ENCODE measurements at regions of chr1 and their contacts with region 1.

Region 1: GRCh38 chr1:211415700-211416099 is 76.3 kb downstream of the RD3 start:
- DNase-seq: no peak
- ATAC-seq: no peak
- H3K4me3 Mint-ChIP-seq: peak overlapping the region; percentile 66
- H3K27ac Mint-ChIP-seq: peak overlapping the region; percentile 25
- H3K4me1 Mint-ChIP-seq: peaks cover 10% of the 10 kb centered on the region
- H3K27me3 Mint-ChIP-seq: no peaks in the 10 kb centered on the region
- CTCF ChIP-seq: no peak

Region 2: DNA sequence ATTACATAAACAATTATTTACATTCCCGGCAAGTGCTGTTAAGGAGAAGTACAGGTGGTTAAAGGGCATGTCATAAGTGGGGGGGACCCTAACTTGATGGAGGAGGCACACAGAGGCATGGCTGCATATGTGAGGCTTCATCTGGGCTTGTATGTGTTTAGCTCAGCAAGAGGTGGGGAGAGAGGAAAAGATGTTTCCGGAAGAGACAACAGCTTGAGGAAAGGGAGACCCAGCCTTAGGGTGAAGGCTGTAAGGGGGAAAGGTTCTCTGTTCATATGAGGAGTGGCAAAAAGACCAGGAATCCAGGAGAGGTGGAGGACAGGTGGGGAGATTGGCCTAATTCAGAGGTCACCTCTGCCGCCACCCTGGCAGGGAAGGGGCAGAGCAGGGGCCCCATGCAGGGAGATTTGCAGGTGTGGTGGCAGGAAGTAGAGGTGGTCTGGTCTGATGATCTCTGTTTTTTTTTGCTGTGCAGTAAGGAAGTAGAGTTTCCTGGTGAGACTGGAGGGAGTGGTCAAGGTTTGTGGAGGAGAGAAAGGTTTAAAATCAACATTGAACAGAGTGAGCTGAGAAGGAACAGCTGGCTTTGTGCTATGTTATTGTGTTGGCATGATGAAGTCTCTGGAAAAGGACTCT is 80.1 kb before region 1 on chr1:
- CTCF ChIA-PET with region 1: no interaction called
- POLR2A ChIA-PET with region 1: no interaction called
- intact Hi-C with region 1: no loop called
- DNase-seq: no peak
- ATAC-seq: peak; percentile 86
- H3K4me3 Mint-ChIP-seq: peak overlapping the region; percentile 70
- H3K27ac Mint-ChIP-seq: peak overlapping the region; percentile 88
- H3K4me1 Mint-ChIP-seq: peaks cover 100% of the 10 kb centered on the region
- H3K27me3 Mint-ChIP-seq: no peaks in the 10 kb centered on the region
- CTCF ChIP-seq: no peak

Region 3: GRCh38 chr1:211371406-211372105 is 44.1 kb before region 1 on chr1:
- CTCF ChIA-PET with region 1: no interaction called
- POLR2A ChIA-PET with region 1: no interaction called
- intact Hi-C with region 1: no loop called
- DNase-seq: no peak
- ATAC-seq: no peak
- H3K4me3 Mint-ChIP-seq: no peak overlapping the region
- H3K27ac Mint-ChIP-seq: peak overlapping the region; percentile 33
- H3K4me1 Mint-ChIP-seq: no peaks in the 10 kb centered on the region
- H3K27me3 Mint-ChIP-seq: no peaks in the 10 kb centered on the region
- CTCF ChIP-seq: no peak

Region 4: GRCh38 chr1:211382714-211383480 is 32.8 kb before region 1 on chr1:
- CTCF ChIA-PET with region 1: no interaction called
- POLR2A ChIA-PET with region 1: interaction called, 13 read pairs
- intact Hi-C with region 1: loop called (anchors 1 kb)
- DNase-seq: peak; percentile 86
- ATAC-seq: peak; percentile 96
- H3K4me3 Mint-ChIP-seq: peak overlapping the region; percentile 93
- H3K27ac Mint-ChIP-seq: peak overlapping the region; percentile 98
- H3K4me1 Mint-ChIP-seq: peaks cover 20% of the 10 kb centered on the region
- H3K27me3 Mint-ChIP-seq: no peaks in the 10 kb centered on the region
- CTCF ChIP-seq: no peak

Region 5: GRCh38 chr1:212440419-212440818 is 1024.7 kb after region 1 on chr1:
- CTCF ChIA-PET with region 1: no interaction called
- POLR2A ChIA-PET with region 1: no interaction called
- intact Hi-C with region 1: no loop called
- DNase-seq: no peak
- ATAC-seq: no peak
- H3K4me3 Mint-ChIP-seq: no peak overlapping the region
- H3K27ac Mint-ChIP-seq: no peak overlapping the region
- H3K4me1 Mint-ChIP-seq: peaks cover 4% of the 10 kb centered on the region
- H3K27me3 Mint-ChIP-seq: no peaks in the 10 kb centered on the region
- CTCF ChIP-seq: no peak